Activated CD8-positive, alpha-beta T cell treated with anti-CD3 and anti-CD28 coated beads for 36 hours (primary cell): ENCODE measurements at regions of chr10 and their contacts with region 1.

Region 1: DNA sequence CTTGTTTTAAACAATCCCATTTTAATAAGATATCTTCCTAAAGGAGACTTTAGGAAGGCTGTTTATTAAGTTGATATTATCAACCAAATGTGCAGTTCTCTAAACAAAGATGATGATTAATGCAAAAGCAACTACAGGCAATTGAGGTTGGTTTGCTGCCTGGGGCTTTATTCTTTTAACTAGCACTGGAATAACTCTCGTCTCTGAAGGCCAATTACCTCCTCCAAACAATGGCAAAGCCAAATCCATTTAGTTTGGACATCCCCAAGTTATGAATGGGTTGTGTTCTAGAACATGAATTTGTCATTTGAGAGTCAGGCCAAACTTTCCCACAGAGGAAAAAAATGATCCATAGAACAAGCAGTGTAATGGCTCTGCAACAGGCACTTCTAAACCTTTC is 114.1 kb downstream of the SLC16A9 start:
- DNase-seq: no peak
- ATAC-seq: no peak
- H3K4me3 Mint-ChIP-seq: no peak overlapping the region
- H3K27ac Mint-ChIP-seq: no peak overlapping the region
- H3K4me1 Mint-ChIP-seq: no peaks in the 10 kb centered on the region
- H3K27me3 Mint-ChIP-seq: peaks cover 5% of the 10 kb centered on the region
- CTCF ChIP-seq: no peak

Region 2: GRCh38 chr10:59323036-59323459 is 272.5 kb before region 1 on chr10:
- CTCF ChIA-PET with region 1: no interaction called
- POLR2A ChIA-PET with region 1: no interaction called
- intact Hi-C with region 1: no loop called
- DNase-seq: no peak
- ATAC-seq: no peak
- H3K4me3 Mint-ChIP-seq: no peak overlapping the region
- H3K27ac Mint-ChIP-seq: no peak overlapping the region
- H3K4me1 Mint-ChIP-seq: no peaks in the 10 kb centered on the region
- H3K27me3 Mint-ChIP-seq: peaks cover 1% of the 10 kb centered on the region
- CTCF ChIP-seq: no peak

Region 3: GRCh38 chr10:59536167-59536930 is 59.2 kb before region 1 on chr10:
- CTCF ChIA-PET with region 1: no interaction called
- POLR2A ChIA-PET with region 1: no interaction called
- intact Hi-C with region 1: loop called (anchors 10 kb)
- DNase-seq: no peak
- ATAC-seq: no peak
- H3K4me3 Mint-ChIP-seq: no peak overlapping the region
- H3K27ac Mint-ChIP-seq: no peak overlapping the region
- H3K4me1 Mint-ChIP-seq: no peaks in the 10 kb centered on the region
- H3K27me3 Mint-ChIP-seq: no peaks in the 10 kb centered on the region
- CTCF ChIP-seq: no peak